Activated CD8-positive, alpha-beta T cell treated with anti-CD3 and anti-CD28 coated beads for 36 hours (primary cell): ENCODE measurements at regions of chr16 and their contacts with region 1.

Region 1: GRCh38 chr16:3150346-3151218 is 15.8 kb downstream of the ZNF213 start:
- DNase-seq: peak; percentile 98
- ATAC-seq: peak; percentile 84
- H3K4me3 Mint-ChIP-seq: peak overlapping the region; percentile 85
- H3K27ac Mint-ChIP-seq: peak overlapping the region; percentile 89
- H3K4me1 Mint-ChIP-seq: peaks cover 17% of the 10 kb centered on the region
- H3K27me3 Mint-ChIP-seq: peaks cover 4% of the 10 kb centered on the region
- CTCF ChIP-seq: no peak

Region 2: DNA sequence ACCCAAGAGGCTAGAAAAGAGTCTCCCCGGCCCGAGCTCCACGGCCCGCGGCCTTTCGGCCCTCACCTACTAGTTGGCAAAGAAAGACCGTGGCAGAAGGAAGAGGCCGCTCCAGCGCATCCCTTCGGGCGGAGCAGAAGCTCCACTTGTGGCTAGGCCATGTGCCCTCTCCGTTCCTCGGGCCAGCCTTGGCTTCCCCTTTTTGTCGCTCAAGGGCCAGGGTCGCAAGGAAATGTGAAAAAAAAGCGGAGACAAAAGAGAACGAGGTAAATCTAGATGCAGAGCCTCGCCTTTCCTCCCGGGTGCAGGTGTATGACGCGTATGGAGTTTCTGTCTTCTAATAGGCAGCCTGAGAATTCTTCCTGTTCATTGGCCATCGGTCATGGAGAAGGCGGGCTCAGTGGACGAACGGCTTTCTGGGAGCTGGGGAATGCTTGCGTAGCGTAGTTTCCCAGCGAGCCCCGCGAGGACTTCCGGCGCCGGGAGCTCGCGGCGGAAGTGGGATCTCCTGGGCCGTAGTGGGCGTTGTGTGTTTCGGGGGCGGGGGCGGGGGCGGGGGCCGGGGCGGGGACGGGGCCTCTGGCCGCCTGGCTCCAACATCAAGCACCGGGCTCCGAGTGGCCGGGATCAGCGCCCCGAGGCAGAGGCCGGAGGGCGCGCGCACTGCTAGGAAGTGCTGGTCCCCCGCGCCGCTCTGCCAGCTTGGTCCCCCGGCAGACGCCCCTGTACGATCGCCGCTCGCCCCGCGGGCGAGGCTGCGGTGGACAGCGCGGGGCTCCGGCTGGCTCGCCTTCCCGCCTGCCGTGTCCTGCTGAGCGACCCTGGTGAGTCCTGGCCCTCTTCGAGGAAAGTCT is 15.8 kb before region 1 on chr16 and contains the start of gene ZNF213:
- CTCF ChIA-PET with region 1: interaction called, 33 read pairs
- POLR2A ChIA-PET with region 1: interaction called, 25 read pairs
- intact Hi-C with region 1: no loop called
- DNase-seq: peak; percentile 97
- ATAC-seq: peak; percentile 98
- H3K4me3 Mint-ChIP-seq: peak within 1 kb of the TSS; percentile 99
- H3K27ac Mint-ChIP-seq: peak within 1 kb of the TSS; percentile 98
- H3K4me1 Mint-ChIP-seq: peaks cover 14% of the 10 kb centered on the region
- H3K27me3 Mint-ChIP-seq: no peaks in the 10 kb centered on the region
- CTCF ChIP-seq: no peak
- total RNA-seq, gene ZNF213: 6.1 to 7.5 TPM

Region 3: DNA sequence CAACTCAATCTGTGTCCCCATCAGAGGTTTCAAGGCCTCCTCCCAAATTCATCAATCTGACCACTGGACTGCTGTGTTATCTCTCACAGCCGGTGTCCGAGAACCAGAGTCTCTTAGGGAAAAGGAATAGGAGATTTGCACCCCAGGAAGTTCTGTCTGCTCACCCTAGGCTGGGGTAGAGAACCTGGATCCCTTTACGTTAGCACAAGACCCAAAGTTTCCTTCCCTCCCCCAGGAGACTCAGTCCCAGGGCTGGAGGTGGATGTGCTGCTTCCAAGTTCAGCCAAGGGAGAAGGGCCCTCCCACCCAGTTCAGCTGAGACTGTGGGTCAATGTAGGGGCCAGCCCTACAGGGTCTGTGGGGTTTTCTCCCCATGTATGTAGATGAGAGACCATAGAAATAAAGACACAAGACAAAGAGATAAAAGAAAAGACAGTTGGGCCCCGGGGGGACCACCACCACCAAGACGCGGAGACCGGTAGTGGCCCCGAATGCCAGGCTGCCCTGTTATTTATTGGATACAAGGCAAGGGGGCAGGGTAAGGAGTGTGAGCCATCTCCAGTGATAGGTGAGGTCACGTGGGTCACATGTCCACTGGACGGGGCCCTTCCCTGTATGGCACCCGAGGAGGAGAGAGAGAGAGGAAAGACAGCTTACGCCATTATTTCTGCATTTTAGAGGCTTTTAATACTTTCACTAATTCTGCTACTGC is 14.7 kb after region 1 on chr16:
- CTCF ChIA-PET with region 1: interaction called, 37 read pairs
- POLR2A ChIA-PET with region 1: interaction called, 21 read pairs
- intact Hi-C with region 1: no loop called
- DNase-seq: no peak
- ATAC-seq: no peak
- H3K4me3 Mint-ChIP-seq: peak overlapping the region; percentile 45
- H3K27ac Mint-ChIP-seq: peak overlapping the region; percentile 71
- H3K4me1 Mint-ChIP-seq: peaks cover 18% of the 10 kb centered on the region
- H3K27me3 Mint-ChIP-seq: peaks cover 10% of the 10 kb centered on the region
- CTCF ChIP-seq: no peak

Region 4: DNA sequence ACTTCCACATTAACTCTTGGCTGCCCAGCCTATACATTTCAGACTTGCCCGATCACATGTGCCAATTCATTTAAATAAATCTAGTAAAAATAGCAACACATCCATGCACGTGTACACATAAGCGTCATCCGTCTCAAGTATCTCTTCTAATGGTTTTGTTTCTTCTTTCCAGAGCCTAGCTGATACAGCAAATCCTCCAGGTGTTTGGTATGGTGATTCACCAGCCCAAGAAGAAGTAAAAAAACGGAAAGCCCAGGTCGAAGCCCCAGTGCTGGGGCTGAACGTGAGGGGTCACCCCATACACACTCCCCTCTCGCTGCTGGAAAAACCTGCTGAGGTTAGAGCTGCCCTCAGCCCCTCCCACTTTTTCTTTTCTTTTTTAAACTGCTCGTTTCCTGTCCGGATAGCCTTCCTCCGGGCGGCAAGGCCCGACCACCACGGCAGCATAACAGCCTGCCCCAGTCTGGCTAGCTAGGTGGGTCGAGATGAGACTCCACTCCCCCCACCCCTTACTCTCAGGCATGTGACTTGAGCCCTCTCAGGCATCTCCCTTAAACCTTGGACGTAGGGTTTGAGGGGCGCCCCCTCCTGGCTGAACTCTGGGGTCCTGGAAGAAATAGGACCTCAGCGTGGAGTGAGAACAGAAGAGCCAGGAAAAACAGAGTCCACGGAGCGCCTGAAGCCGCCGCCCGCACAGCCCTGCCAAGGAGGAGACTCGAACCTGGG is 23.5 kb after region 1 on chr16:
- CTCF ChIA-PET with region 1: interaction called, 37 read pairs
- POLR2A ChIA-PET with region 1: interaction called, 6 read pairs
- intact Hi-C with region 1: no loop called
- DNase-seq: peak; percentile 71
- ATAC-seq: peak; percentile 28
- H3K4me3 Mint-ChIP-seq: peak overlapping the region; percentile 70
- H3K27ac Mint-ChIP-seq: peak overlapping the region; percentile 43
- H3K4me1 Mint-ChIP-seq: peaks cover 34% of the 10 kb centered on the region
- H3K27me3 Mint-ChIP-seq: peaks cover 45% of the 10 kb centered on the region
- CTCF ChIP-seq: peak; percentile 68

Region 5: DNA sequence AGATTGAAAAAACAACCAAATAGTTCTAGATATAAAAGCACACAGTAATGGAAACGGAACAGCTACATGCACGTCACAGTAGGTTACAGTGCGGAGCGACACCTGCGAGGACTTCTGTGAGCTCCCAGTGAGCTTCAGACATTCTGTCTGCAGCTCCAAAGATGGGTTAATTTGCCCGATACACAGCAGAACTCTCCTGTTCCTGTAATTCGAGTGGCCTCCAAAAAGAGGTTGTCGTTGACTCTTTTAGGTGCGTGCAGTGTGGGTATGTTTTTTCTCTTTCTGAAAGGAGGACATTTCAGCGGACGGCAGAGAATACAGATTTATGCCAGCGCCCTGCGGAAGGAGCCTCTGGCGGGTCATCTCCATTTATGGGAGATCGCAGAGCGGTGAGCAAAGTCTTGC is 40.4 kb after region 1 on chr16:
- CTCF ChIA-PET with region 1: no interaction called
- POLR2A ChIA-PET with region 1: interaction called, 3 read pairs
- intact Hi-C with region 1: loop called (anchors 5 kb)
- DNase-seq: no peak
- ATAC-seq: no peak
- H3K4me3 Mint-ChIP-seq: peak overlapping the region; percentile 73
- H3K27ac Mint-ChIP-seq: peak overlapping the region; percentile 34
- H3K4me1 Mint-ChIP-seq: peaks cover 38% of the 10 kb centered on the region
- H3K27me3 Mint-ChIP-seq: peaks cover 71% of the 10 kb centered on the region
- CTCF ChIP-seq: no peak

Region 6: GRCh38 chr16:3268294-3268693 is 117.7 kb after region 1 on chr16:
- CTCF ChIA-PET with region 1: no interaction called
- POLR2A ChIA-PET with region 1: no interaction called
- intact Hi-C with region 1: no loop called
- DNase-seq: no peak
- ATAC-seq: no peak
- H3K4me3 Mint-ChIP-seq: no peak overlapping the region
- H3K27ac Mint-ChIP-seq: no peak overlapping the region
- H3K4me1 Mint-ChIP-seq: peaks cover 30% of the 10 kb centered on the region
- H3K27me3 Mint-ChIP-seq: no peaks in the 10 kb centered on the region
- CTCF ChIP-seq: no peak

Region 7: DNA sequence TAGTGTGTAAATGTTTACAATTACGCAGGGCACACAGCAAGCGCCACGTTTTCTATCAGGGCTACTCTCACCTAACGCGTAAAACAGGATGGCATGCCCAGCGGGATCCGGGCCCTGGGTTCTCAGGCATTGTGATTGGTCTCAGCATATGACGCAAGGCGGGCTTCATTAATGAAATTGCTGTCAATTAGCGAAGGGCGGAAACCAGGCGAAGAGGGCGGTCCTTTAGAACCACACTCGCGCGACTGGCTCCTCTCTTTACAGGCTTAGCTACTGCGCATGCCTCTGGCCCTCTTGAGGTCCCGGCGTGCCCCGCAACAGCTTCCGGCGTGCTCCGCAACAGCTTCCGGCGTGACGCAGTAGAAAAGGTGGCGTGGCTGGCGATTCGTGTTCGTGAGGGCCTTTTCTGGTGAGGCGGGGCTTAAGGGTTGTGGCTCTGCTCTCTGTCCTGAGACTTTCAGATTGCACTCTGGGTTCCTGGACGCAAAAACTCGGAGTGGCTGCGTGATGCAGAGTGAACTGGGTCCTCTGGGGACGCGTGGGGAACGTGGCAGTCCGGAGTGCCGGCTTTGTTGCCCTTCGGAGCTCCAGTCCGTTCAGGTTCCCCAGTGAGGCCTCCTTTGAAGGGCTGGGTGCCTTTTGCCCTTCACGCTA is 214.3 kb after region 1 on chr16:
- CTCF ChIA-PET with region 1: no interaction called
- POLR2A ChIA-PET with region 1: no interaction called
- intact Hi-C with region 1: no loop called
- DNase-seq: peak; percentile 95
- ATAC-seq: peak; percentile 99
- H3K4me3 Mint-ChIP-seq: peak overlapping the region; percentile 80
- H3K27ac Mint-ChIP-seq: peak overlapping the region; percentile 93
- H3K4me1 Mint-ChIP-seq: peaks cover 13% of the 10 kb centered on the region
- H3K27me3 Mint-ChIP-seq: peaks cover 11% of the 10 kb centered on the region
- CTCF ChIP-seq: no peak